ENCODE measurements at regions of chr10 and their contacts with region 1.

Region 1: DNA sequence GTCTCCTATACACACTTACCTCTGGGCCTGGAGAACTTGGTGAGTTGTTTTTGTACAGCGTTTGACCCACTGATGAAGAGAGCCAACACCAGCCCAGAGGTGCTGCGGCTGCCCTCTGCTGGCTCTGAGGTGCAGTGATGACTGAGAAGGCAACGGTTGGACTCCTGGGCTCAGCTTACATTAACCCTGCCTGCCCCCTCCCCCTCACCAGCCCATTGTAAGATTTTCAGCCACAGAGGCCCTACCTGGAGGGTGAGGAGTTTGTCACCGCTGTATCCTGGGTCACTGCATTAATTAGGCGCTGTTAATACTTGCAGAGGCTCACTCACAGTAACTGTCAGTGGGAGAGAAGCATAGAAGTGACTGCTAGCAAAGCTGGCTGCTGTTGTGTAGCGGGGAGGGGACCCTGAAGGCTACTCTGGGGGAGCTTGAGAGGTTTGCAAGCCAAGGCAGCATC is 19.0 kb upstream of the ANKRD2 start:
- H3K4me3 ChIP-seq: no peak overlapping the region
- H3K27ac ChIP-seq: no peak overlapping the region
- H3K4me1 ChIP-seq: peaks cover 6% of the 10 kb centered on the region; the same call in 1 of the 2 replicates
- CTCF ChIP-seq: peak; percentile 83

Region 2: DNA sequence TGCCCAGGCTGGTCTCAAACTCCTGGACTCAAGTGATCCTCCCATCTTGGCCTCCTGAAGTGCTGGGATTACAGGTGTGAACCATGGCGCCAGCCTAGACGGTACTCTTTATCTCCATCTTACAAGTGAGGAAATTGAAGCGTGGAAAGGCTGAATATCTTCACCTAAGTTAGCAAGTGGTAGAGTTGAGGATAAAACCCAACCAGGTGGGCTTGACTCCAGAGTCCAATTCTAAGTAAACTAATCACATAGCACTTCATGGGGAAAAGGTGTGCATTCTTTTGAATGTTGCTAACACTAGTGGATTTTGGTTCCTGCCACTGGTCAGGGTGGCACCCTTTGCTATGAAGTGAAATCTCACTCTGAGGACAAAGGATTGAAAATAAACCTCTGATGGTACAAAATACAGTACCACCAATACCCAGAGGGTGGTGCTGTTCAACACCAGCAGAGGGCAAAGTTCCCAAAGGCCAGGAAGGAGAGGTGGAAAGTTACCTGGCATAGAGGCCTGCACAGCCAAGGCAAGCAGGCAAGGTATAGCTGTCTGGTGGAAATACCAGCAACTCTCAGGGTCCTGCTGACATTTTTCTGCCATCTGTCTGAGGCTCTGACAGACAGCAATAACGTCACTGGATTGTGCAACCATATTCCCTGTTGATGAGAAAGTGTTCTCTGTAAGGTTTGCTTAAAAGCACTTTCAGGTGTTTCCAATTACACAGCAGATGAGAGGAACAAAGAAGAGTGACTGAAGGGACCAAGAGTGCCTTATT is 90.1 kb before region 1 on chr10:
- CTCF ChIA-PET with region 1: interaction called, 81 read pairs
- POLR2A ChIA-PET with region 1: interaction called, 3 read pairs
- H3K4me3 ChIP-seq: no peak overlapping the region
- H3K27ac ChIP-seq: no peak overlapping the region
- H3K4me1 ChIP-seq: no peaks in the 10 kb centered on the region
- CTCF ChIP-seq: peak; percentile 82

Region 3: DNA sequence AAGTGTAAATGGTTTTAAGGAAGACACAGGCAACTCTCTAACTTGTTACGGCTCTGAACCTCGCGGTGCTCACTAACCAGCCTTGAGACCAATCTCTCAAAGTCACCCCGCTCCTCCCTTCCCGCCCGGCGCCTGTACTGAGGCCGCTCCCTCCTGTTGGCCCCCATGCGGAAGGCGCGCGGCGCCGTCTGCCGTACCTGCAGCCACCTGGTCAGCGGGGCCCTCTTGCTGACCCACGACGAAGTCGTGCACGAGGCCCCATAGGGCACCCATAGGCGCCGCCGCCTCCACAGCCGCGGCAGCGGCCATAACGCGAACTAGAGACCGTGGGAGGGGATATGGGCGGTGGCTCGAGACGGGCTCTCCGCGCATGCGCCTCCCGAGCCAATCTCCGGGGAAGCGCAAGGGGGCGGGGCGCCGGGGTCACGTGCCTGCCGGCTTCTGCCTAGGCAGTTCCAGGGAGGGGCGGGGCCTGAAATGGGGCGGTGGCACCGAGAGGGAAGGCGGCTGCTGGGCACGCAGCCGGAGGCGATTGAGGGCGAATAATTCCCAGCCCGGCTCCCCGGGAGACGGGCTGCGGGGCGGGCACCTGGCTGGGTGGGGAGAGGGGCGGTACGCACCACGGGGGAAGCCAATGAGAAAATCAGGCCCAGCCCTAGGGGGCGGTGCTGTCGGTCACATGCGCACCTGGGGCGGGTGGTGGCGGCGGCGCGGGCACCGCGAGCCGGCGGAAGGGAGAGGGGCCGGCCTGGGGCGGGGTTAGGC is 55.3 kb before region 1 on chr10 and contains the start of gene MMS19:
- CTCF ChIA-PET with region 1: interaction called, 22 read pairs
- POLR2A ChIA-PET with region 1: interaction called, 5 read pairs
- H3K4me3 ChIP-seq: peak within 1 kb of the TSS; percentile 88
- H3K27ac ChIP-seq: peak within 1 kb of the TSS; percentile 89
- H3K4me1 ChIP-seq: peaks cover 16% of the 10 kb centered on the region
- CTCF ChIP-seq: peak; percentile 22; the same call in 1 of the 2 replicates

Region 4: GRCh38 chr10:97534746-97535367 is 18.7 kb before region 1 on chr10:
- CTCF ChIA-PET with region 1: interaction called, 54 read pairs
- POLR2A ChIA-PET with region 1: no interaction called
- H3K4me3 ChIP-seq: no peak overlapping the region
- H3K27ac ChIP-seq: no peak overlapping the region
- H3K4me1 ChIP-seq: no peaks in the 10 kb centered on the region
- CTCF ChIP-seq: peak; percentile 53; the same call in 1 of the 2 replicates

Region 5: DNA sequence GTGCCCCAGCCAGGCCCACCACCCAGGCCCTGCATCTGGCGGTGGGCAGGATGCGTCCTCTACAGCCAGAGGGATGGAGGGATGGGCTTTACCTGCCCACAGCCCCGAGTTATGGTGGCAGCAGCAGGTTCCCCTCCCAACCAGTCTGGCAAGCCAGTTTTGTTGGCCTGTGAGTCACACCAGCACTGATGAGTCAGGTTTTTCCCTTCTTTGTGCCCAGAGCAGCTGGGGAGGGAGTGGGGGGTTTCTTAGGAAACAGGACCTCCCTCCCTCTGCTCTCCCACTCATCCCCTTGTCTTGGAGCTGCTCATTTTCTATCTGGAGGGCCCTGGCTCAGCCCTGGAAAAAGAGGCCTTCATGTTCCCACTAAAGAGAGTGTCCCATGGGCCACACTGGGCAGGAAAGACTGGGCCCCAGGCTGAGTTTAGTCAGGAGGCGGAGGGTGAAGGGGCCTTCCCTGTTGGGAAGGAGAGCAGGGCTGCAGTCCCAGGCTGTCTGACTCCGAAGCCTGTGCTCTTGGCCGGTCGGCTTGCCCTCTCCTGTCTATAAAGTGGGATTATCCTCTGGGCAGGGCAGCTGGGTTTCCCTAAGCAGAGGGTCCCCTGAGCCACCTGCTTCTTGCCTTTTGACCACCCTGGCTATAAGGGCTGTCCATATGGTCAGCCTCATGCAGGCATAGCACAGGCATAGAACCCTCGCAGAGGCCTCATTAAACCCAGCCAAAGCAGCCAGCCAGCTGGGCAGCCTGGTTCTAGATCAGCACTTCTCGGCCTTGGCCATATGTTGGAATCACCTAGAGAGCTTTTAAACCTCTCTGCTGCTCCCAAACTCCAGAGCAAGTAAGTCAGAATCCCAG is 11.2 kb before region 1 on chr10:
- CTCF ChIA-PET with region 1: interaction called, 27 read pairs
- POLR2A ChIA-PET with region 1: no interaction called
- H3K4me3 ChIP-seq: no peak overlapping the region
- H3K27ac ChIP-seq: peak overlapping the region; percentile 64
- H3K4me1 ChIP-seq: peaks cover 8% of the 10 kb centered on the region; the same call in 1 of the 2 replicates
- CTCF ChIP-seq: no peak

Region 6: GRCh38 chr10:97659589-97659988 is 106.0 kb after region 1 on chr10:
- CTCF ChIA-PET with region 1: no interaction called
- POLR2A ChIA-PET with region 1: no interaction called
- H3K4me3 ChIP-seq: no peak overlapping the region
- H3K27ac ChIP-seq: no peak overlapping the region
- H3K4me1 ChIP-seq: 0 out of 2 replicates have a peak, but pooled peaks cover 3% of the 10 kb centered on the region
- CTCF ChIP-seq: no peak